HCT116 (cell line): ENCODE measurements at regions of chrX and their contacts with region 1.

Region 1: DNA sequence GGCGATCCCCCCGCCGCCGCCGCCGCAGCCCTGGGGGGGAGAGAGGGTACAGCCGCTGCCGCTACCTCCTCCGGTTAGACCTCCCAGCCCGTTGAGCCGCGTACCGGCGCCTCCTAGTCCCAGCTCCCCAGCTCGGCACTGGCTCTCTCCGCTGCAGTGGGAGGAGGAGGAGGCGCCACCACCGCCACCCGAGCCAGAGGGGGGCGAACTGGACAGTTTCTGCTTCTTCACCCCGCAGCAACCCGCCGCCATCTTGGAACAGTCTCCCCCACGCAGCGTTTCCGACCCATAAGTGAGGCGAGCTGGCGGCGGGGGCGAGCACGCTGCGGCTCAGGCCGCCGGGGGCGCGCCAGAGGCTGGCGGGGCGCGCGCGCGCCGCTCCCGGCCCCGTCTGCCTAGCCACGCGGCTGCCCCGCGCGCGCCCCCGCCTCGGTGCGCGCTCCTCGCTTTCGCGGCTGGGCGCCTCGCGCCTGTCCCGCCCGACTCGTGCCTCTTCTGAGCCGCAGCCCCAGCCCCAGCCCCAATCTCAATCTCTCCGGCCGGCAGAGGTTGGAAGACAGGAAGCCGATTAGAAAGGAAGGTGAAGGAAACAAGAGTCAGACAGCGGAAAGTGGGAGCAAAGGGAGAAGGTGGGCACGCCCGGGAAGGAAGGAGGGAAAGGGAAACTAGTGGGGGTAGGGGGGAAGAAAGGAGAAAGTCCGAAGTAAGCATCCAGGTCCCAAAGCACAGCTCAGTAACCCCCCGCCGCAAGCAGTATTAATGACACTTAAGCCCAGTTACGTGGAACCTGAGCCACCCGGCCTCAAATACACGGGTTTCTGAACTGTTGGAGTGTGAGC is at the start of gene AMMECR1:
- DNase-seq: peak; percentile 31
- ATAC-seq: peak; percentile 84
- H3K4me3 ChIP-seq: peak within 1 kb of the TSS; percentile 71 to 75
- H3K27ac ChIP-seq: peak within 1 kb of the TSS; percentile 63
- H3K4me1 ChIP-seq: peaks cover 0 to 14% of the 10 kb centered on the region in 2 experiments; a peak in 1 of 4 replicates
- H3K27me3 ChIP-seq: no peaks in the 10 kb centered on the region
- CTCF ChIP-seq: no peak
- POLR2A ChIP-seq: peak; percentile 45
- RAD21 ChIP-seq: no peak
- total RNA-seq, gene AMMECR1: 9.2 TPM

Region 2: GRCh38 chrX:110210417-110211139 is 107.5 kb before region 1 on chrX:
- CTCF ChIA-PET with region 1: no interaction called
- POLR2A ChIA-PET with region 1: no interaction called
- RAD21 ChIA-PET with region 1: no interaction called
- intact Hi-C with region 1: loop called (anchors 10 kb)
- DNase-seq: peak; percentile 40
- ATAC-seq: peak; percentile 81
- H3K4me3 ChIP-seq: peak overlapping the region in 1 of 2 experiments; percentile 35; a peak in 3 of 4 replicates
- H3K27ac ChIP-seq: no peak overlapping the region
- H3K4me1 ChIP-seq: peaks cover 17 to 54% of the 10 kb centered on the region in 2 experiments
- H3K27me3 ChIP-seq: no peaks in the 10 kb centered on the region
- CTCF ChIP-seq: no peak
- POLR2A ChIP-seq: no peak
- RAD21 ChIP-seq: no peak

Region 3: DNA sequence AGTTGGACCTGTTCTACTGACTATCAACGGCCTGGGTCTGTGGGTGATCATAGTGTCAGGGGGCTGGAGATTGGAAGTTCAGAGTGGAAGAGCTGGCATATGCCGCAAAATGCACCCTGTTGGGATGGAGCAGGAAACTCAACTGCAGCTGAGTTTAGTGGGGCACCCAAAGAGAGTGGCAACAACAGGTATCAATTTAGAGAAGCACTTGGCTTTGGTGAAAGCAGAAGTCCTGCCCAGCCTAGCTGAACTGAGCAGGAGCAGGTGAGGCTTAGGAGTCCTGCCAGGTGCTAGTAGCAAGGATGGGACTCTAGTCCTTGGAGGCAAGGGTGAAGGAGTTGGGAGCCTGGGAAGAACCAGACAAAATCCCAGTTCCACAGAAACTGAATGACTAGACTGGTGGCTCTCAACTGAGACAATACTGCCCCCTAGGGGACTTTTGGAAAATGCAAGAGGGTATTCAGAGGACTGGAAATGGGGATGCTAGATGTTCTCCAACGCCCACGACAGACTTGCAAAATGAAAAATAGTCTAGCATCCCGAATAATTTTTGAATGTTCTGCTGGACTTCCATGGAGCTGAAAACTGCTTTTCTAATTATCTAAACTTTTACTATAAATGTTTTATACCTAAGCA is 90.0 kb after region 1 on chrX:
- CTCF ChIA-PET with region 1: no interaction called
- POLR2A ChIA-PET with region 1: no interaction called
- RAD21 ChIA-PET with region 1: no interaction called
- intact Hi-C with region 1: loop called (anchors 5 kb)
- DNase-seq: peak; percentile 39
- ATAC-seq: peak; percentile 76
- H3K4me3 ChIP-seq: no peak overlapping the region
- H3K27ac ChIP-seq: no peak overlapping the region
- H3K4me1 ChIP-seq: peaks cover 5 to 11% of the 10 kb centered on the region in 2 experiments; a peak in 3 of 4 replicates
- H3K27me3 ChIP-seq: no peaks in the 10 kb centered on the region
- CTCF ChIP-seq: peak; percentile 53 to 64 (median 60); a peak in 5 of 6 replicates
- POLR2A ChIP-seq: no peak
- RAD21 ChIP-seq: peak; percentile 79